Activated CD4-positive, alpha-beta T cell treated with anti-CD3 and anti-CD28 coated beads, Interleukin-2, amount 10 ng/mL, durations not matched to agents 24 days and 14 days (primary cell): ENCODE measurements at regions of chr12 and their contacts with region 1.

Region 1: GRCh38 chr12:33649992-33650391 is 210.4 kb upstream of the SYT10 start:
- DNase-seq: no peak
- H3K4me3 Mint-ChIP-seq: no peak overlapping the region
- H3K27ac Mint-ChIP-seq: no peak overlapping the region
- H3K4me1 Mint-ChIP-seq: no peaks in the 10 kb centered on the region
- H3K27me3 Mint-ChIP-seq: no peaks in the 10 kb centered on the region

Region 2: GRCh38 chr12:33575346-33575745 is 74.6 kb before region 1 on chr12:
- intact Hi-C with region 1: loop called (anchors 10 kb)
- DNase-seq: no peak
- H3K4me3 Mint-ChIP-seq: no peak overlapping the region
- H3K27ac Mint-ChIP-seq: no peak overlapping the region
- H3K4me1 Mint-ChIP-seq: no peaks in the 10 kb centered on the region
- H3K27me3 Mint-ChIP-seq: no peaks in the 10 kb centered on the region

Region 3: DNA sequence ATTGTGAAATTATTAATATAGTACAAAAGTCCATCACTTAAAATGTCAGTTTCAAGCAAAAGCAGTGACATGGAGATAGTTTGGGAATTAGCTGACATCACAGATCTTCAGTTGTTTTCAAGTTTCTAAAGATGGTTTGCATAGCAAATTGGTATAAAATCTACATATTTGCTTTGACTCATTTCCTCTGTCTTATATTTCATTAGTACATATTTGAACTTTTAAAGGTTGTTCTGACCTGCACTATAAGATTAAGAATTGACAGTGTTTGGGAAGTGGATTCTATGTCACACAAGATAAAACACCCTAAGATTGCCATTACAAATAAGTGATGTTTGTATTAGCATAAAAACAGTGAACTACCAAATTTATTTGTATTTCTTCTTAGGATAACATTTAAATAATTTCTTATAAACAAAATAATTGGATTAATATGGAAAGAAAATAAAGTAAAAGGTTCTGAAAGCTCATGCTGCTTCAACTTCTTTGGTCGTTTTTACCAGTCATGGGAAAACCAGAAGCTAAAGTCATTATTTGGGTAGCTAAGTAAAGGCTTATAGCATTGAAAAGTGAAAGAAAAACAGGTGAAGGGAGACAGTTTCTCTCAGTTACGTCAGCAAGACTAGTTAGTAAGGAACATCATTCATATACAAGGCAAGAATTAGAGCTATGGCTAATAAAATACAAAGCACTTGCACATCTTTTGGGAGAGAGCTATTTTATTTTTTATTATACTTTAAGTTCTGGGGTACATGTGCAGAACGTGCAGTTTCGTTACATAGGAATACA is 40.3 kb before region 1 on chr12:
- intact Hi-C with region 1: no loop called
- DNase-seq: no peak
- H3K4me3 Mint-ChIP-seq: no peak overlapping the region
- H3K27ac Mint-ChIP-seq: no peak overlapping the region
- H3K4me1 Mint-ChIP-seq: no peaks in the 10 kb centered on the region
- H3K27me3 Mint-ChIP-seq: no peaks in the 10 kb centered on the region